Heart right ventricle (tissue), 16 donors: ENCODE measurements at regions of chr16 and their contacts with region 1.

Region 1: DNA sequence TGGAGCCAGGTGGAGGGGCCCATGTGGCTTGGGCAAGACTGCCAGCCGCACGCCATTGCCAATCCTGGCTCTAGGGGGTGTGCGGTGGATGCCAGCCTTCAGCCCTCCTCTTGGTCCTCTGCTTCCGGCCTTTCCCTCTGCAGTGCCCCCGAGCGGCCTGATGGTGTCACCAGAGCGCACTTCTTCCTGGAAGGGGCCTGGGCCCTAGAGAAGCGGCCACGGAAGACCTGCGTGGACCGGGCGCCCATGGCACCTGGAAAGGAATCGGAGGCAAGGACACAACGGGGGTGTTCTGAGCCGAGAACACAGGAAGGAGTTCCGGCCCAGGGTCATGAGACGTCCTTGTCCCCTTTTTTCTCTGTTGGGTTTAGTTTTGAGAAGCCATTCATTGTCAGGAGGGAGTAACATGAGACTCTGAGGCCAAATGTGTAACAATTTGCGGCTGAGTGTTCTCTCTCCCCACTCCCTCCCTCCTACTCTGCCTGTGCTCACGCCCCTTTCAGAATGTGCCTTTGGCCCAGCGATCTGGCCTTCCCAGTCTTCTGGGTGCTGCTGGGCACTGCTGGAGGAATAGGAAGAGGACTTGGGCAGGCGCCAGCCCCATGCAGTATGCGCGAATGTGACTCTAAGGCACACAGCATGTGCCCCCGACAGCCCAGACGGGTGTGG is 92.8 kb downstream of the IRX3 start:
- DNase-seq: peak; percentile 82 to 85
- ATAC-seq: peak; percentile 82 to 94 (median 90)
- H3K4me3 ChIP-seq: peak overlapping the region in 8 of 10 donors; percentile 10 to 47 (median 34)
- H3K27ac ChIP-seq: peak overlapping the region; percentile 76 to 91 (median 86)
- H3K4me1 ChIP-seq: peaks cover 0 to 25% (median 13%) of the 10 kb centered on the region in 9 donors
- H3K27me3 ChIP-seq: peaks cover 0 to 2% (median 0%) of the 10 kb centered on the region in 7 donors
- CTCF ChIP-seq: peak; percentile 78 to 93 (median 87)

Region 2: DNA sequence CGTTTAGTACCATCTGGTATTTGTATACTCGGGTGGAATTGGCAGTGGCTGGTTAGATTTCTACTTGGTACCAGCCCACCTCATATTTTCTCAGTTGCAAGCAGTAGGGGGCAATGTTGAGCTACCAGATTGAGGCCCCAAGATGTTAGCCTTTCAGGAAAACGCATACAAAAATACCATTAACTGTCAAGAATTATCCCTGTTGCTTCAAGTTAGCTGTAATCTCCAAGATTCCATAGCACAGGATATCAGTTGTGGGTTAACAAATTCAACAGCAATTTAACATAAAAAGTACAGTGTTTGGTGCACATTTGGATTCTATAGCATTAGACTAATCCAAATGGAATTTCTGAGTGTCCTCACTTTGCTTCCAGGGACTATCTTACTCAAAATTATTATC is 301.6 kb before region 1 on chr16:
- intact Hi-C with region 1: loop called in 2 of 10 experiments (anchors 5 to 10 kb)
- DNase-seq: peak in 1 of 2 donors; percentile 55
- ATAC-seq: peak in 7 of 8 donors; percentile 58 to 84 (median 69)
- H3K4me3 ChIP-seq: no peak overlapping the region
- H3K27ac ChIP-seq: no peak overlapping the region
- H3K4me1 ChIP-seq: peaks cover 4 to 43% (median 31%) of the 10 kb centered on the region in 9 donors
- H3K27me3 ChIP-seq: no peaks in the 10 kb centered on the region
- CTCF ChIP-seq: peak; percentile 50 to 84 (median 75)

Region 3: GRCh38 chr16:54266363-54266955 is 72.7 kb after region 1 on chr16:
- intact Hi-C with region 1: loop called in 2 of 10 experiments (anchors 5 to 10 kb)
- DNase-seq: no peak
- ATAC-seq: peak in 5 of 8 donors; percentile 29 to 62 (median 44)
- H3K4me3 ChIP-seq: no peak overlapping the region
- H3K27ac ChIP-seq: peak overlapping the region; percentile 42 to 81 (median 60)
- H3K4me1 ChIP-seq: peaks cover 0 to 28% (median 12%) of the 10 kb centered on the region in 9 donors
- H3K27me3 ChIP-seq: no peaks in the 10 kb centered on the region
- CTCF ChIP-seq: no peak

Region 4: DNA sequence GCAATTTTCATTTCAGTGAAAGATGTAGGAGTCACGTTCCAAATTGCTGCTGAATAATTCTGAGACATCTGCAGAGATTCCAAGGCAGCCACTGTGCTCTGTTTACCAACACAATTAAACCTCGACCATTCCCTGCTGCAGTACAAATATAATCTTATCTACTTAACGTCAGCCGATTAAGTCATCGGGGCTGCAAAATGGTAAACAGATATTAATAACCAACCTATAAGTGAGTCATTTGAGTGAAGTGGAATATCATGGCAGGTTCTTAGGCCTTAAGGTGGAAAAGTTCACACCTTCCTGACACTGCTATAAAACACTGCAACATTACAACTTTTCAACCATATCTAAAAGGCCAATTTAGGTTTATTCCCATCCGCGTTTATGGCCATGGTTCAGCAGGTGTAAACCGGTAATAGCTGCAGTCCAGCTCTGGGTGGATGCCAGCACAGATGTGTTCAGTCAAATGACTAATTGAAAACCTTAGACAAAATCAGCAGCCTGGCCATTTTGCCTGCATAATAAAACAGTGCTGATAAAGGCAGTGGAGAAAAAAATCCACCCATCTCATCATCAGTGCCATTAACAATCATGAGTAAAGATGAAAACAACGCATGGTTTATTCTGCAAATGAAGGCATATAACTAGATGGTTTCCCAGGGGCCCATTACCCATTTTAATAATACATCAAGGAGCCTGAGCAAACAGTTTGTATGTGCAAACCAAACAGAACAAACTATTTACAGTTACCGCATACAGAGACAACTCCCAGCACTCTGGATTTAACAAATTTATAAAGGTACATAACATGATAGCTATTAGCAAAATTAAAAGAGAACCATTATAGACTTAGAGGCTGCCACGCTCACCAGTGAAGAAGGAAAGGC is 295.7 kb after region 1 on chr16:
- intact Hi-C with region 1: loop called in 1 of 10 experiments (anchors 10 kb)
- DNase-seq: no peak
- ATAC-seq: peak in 5 of 8 donors; percentile 29 to 74 (median 61)
- H3K4me3 ChIP-seq: no peak overlapping the region
- H3K27ac ChIP-seq: peak overlapping the region in 8 of 10 donors; percentile 29 to 69 (median 52)
- H3K4me1 ChIP-seq: peaks cover 6 to 48% (median 24%) of the 10 kb centered on the region in 9 donors
- H3K27me3 ChIP-seq: no peaks in the 10 kb centered on the region
- CTCF ChIP-seq: no peak

Region 5: GRCh38 chr16:54817446-54817845 is 623.6 kb after region 1 on chr16:
- intact Hi-C with region 1: loop called in 2 of 10 experiments (anchors 10 kb)
- DNase-seq: peak in 1 of 2 donors; percentile 7
- ATAC-seq: peak; percentile 41 to 72 (median 54)
- H3K4me3 ChIP-seq: no peak overlapping the region
- H3K27ac ChIP-seq: no peak overlapping the region
- H3K4me1 ChIP-seq: no peaks in the 10 kb centered on the region
- H3K27me3 ChIP-seq: no peaks in the 10 kb centered on the region
- CTCF ChIP-seq: peak in 7 of 9 donors; percentile 22 to 57 (median 44)